Vagina (tissue), 2 donors: ENCODE measurements at regions of chr9 and their contacts with region 1.

Region 1: GRCh38 chr9:8382777-8383527 is 583.4 kb upstream of the DMAC1 start:
- DNase-seq: no peak
- H3K4me3 ChIP-seq: no peak overlapping the region
- H3K27ac ChIP-seq: no peak overlapping the region
- H3K4me1 ChIP-seq: no peaks in the 10 kb centered on the region
- H3K27me3 ChIP-seq: no peaks in the 10 kb centered on the region
- CTCF ChIP-seq: no peak
- POLR2A ChIP-seq: no peak

Region 2: GRCh38 chr9:8338767-8339510 is 44.0 kb before region 1 on chr9:
- intact Hi-C with region 1: loop called (anchors 2 kb)
- DNase-seq: no peak
- H3K4me3 ChIP-seq: no peak overlapping the region
- H3K27ac ChIP-seq: no peak overlapping the region
- H3K4me1 ChIP-seq: no peaks in the 10 kb centered on the region
- H3K27me3 ChIP-seq: no peaks in the 10 kb centered on the region
- CTCF ChIP-seq: no peak
- POLR2A ChIP-seq: no peak